Mammary epithelial cell (primary cell): ENCODE measurements at regions of chr5 and their contacts with region 1.

Region 1: DNA sequence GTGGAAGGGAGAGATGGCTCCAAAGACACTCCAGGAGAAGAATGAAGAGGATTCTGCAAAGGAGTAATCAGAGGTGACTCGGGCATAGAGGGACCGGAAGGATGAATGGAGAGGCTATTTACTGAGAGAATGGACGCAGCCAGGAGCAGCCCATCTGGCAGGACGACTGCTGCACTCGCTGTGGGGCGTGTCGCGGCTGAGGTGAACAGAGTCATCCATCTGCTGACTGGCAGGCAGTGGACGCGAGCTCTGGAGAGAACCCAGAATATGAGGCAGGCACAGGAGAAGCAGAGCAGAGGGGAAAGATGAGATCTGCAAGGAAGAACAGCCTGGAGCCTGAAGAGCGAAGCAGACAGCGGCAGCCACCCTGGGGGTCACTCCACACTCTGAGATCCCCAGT is 16.4 kb downstream of the FGF1 start:
- DNase-seq: peak; percentile 27
- H3K4me3 ChIP-seq: no peak overlapping the region
- H3K27ac ChIP-seq: no peak overlapping the region
- H3K4me1 ChIP-seq: peaks cover 42% of the 10 kb centered on the region
- H3K27me3 ChIP-seq: no peaks in the 10 kb centered on the region
- CTCF ChIP-seq: no peak

Region 2: DNA sequence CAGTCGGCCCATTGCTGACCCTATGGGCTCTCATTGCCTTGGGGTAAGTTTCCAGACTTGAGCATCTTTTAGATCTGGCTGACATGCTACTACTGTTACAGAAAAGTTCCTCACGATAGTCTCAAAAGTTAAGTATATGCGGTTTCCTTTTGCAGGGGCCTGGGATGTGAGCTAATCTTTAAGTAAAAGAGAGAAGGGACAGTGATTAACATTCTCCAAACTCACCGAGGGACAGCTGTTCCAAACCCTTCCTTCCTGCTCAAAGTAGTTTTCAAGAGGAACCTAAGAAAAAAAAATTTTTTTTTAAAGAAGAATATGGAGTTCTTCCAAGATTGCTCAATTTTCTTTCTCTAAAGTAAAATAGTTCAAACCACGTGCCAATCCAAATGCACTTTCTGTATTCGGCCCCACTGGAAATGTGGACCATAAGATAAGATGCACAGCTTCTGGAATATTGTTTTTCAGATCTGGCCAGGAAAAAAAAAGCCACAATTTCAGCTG is 176.6 kb before region 1 on chr5:
- CTCF ChIA-PET with region 1: no interaction called
- dilution Hi-C with region 1: no loop called
- in situ Hi-C with region 1: no loop called
- intact Hi-C with region 1: no loop called
- DNase-seq: no peak
- H3K4me3 ChIP-seq: no peak overlapping the region
- H3K27ac ChIP-seq: no peak overlapping the region
- H3K4me1 ChIP-seq: no peaks in the 10 kb centered on the region
- H3K27me3 ChIP-seq: no peaks in the 10 kb centered on the region
- CTCF ChIP-seq: no peak

Region 3: GRCh38 chr5:142618130-142618523 is 51.4 kb before region 1 on chr5:
- CTCF ChIA-PET with region 1: no interaction called
- dilution Hi-C with region 1: loop called (anchors 5 kb)
- in situ Hi-C with region 1: no loop called
- intact Hi-C with region 1: no loop called
- DNase-seq: peak; percentile 77
- H3K4me3 ChIP-seq: no peak overlapping the region
- H3K27ac ChIP-seq: no peak overlapping the region
- H3K4me1 ChIP-seq: peaks cover 47% of the 10 kb centered on the region
- H3K27me3 ChIP-seq: no peaks in the 10 kb centered on the region
- CTCF ChIP-seq: no peak

Region 4: GRCh38 chr5:142684508-142685041 is 15.1 kb after region 1 on chr5:
- CTCF ChIA-PET with region 1: no interaction called
- dilution Hi-C with region 1: no loop called
- in situ Hi-C with region 1: no loop called
- intact Hi-C with region 1: loop called (anchors 1 kb)
- DNase-seq: peak; percentile 44
- H3K4me3 ChIP-seq: peak overlapping the region; percentile 21 to 43 (median 40)
- H3K27ac ChIP-seq: peak overlapping the region; percentile 77
- H3K4me1 ChIP-seq: peaks cover 66% of the 10 kb centered on the region
- H3K27me3 ChIP-seq: no peaks in the 10 kb centered on the region
- CTCF ChIP-seq: no peak